ENCODE measurements at regions of chr6 and their contacts with region 1.

Region 1: DNA sequence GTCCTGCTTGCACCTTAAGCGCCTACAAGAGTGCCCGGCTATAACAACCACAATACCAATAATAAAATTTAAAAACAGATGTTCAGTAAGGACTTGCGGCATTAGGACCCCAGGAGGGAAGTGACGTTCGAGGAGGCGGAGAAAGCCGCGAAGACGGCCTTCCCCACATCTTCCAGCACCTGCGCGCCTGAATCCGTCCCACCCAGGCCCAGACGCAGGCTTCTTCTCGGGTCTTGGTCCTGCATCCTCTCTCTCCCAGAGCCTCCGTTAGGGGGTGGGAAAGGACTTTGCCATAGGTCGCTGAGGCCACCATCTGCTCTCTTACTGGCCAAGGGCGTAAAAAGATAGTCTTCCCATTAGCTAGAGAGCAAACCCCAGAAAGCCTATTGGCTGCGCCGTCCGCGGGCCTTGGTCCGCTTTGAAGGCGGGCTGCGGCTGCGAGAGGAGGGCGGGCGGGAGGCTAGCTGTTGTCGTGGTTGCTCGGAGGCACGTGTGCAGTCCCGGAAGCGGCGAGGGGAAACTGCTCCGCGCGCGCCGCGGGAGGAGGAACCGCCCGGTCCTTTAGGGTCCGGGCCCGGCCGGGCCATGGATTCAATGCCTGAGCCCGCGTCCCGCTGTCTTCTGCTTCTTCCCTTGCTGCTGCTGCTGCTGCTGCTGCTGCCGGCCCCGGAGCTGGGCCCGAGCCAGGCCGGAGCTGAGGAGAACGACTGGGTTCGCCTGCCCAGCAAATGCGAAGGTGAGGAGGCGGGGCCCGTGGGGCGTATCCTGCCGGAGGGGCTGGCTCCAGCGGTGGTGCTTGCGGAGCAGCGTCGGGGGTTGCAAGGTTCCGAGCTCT is at the start of gene CNPY3:
- DNase-seq: peak; percentile 98
- H3K4me3 Mint-ChIP-seq: peak within 1 kb of the TSS; percentile 91
- H3K27ac Mint-ChIP-seq: peak within 1 kb of the TSS; percentile 98
- H3K4me1 Mint-ChIP-seq: peaks cover 34% of the 10 kb centered on the region
- H3K27me3 Mint-ChIP-seq: no peaks in the 10 kb centered on the region
- total RNA-seq, gene CNPY3: 45.9 and 49.0 TPM in 2 replicates

Region 2: GRCh38 chr6:42771741-42772100 is 157.5 kb before region 1 on chr6:
- intact Hi-C with region 1: loop called (anchors 2 kb)
- DNase-seq: peak; percentile 77
- H3K4me3 Mint-ChIP-seq: peak overlapping the region; percentile 83
- H3K27ac Mint-ChIP-seq: peak overlapping the region; percentile 99
- H3K4me1 Mint-ChIP-seq: peaks cover 55% of the 10 kb centered on the region
- H3K27me3 Mint-ChIP-seq: no peaks in the 10 kb centered on the region

Region 3: GRCh38 chr6:42901536-42901957 is 27.7 kb before region 1 on chr6:
- intact Hi-C with region 1: loop called (anchors 2 kb)
- DNase-seq: peak; percentile 93
- H3K4me3 Mint-ChIP-seq: peak overlapping the region; percentile 4
- H3K27ac Mint-ChIP-seq: no peak overlapping the region
- H3K4me1 Mint-ChIP-seq: peaks cover 17% of the 10 kb centered on the region
- H3K27me3 Mint-ChIP-seq: peaks cover 2% of the 10 kb centered on the region

Region 4: DNA sequence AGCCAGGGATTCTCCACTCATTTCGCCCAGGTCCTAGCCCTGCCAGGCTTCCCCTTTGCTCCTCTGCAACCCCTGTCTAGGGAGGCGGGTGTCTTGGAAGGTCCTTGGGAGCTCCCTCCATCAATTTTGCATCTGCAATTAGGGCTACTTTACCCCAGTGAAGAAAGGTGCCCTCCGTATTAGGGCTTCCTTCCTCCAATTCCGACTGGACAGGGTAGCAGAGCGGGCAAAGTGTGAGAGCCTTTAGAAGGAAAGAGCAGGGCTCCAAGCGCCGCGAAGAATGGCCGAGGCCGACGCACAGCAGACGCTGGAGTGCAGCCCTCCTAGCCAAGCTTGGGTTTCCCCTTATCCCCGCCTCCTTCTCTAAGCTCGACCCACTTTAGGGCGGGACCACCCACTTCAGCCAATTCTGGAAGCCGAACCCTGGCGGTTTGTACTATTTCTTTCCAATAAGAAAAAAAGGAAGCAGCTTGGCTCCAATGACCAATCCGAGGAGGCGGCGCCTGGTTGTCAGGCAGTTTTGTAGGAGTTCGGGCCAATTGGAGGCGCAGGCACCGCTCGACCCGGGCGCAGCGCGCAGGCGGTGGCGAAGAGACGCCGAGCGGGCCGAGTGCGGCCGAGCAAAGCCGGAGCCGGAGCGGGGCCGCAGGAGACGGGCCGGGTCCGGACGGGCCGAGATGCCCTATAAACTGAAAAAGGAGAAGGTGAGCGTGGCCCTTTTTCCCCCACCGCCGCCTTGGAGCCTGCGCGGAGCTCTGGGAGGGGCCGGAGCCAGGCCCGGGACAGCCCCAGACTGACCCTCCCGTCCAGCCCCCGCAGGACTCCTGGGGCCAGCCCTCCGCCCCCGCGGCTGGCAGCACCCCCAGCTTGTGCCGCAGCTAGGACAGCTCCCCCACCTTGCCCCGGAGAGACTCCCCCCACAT is 55.1 kb after region 1 on chr6 and contains the start of gene PPP2R5D:
- intact Hi-C with region 1: loop called (anchors 1 kb)
- DNase-seq: peak; percentile 99
- H3K4me3 Mint-ChIP-seq: peak within 1 kb of the TSS; percentile 98
- H3K27ac Mint-ChIP-seq: peak within 1 kb of the TSS; percentile 91
- H3K4me1 Mint-ChIP-seq: peaks cover 54% of the 10 kb centered on the region
- H3K27me3 Mint-ChIP-seq: no peaks in the 10 kb centered on the region
- total RNA-seq, gene PPP2R5D: 54.2 and 54.6 TPM in 2 replicates

Region 5: GRCh38 chr6:43053545-43054205 is 124.5 kb after region 1 on chr6 and contains the start of gene CUL7:
- intact Hi-C with region 1: loop called (anchors 1 kb)
- DNase-seq: peak; percentile 98
- H3K4me3 Mint-ChIP-seq: peak within 1 kb of the TSS; percentile 96
- H3K27ac Mint-ChIP-seq: peak within 1 kb of the TSS; percentile 98
- H3K4me1 Mint-ChIP-seq: peaks cover 43% of the 10 kb centered on the region
- H3K27me3 Mint-ChIP-seq: no peaks in the 10 kb centered on the region
- total RNA-seq, gene CUL7: 22.6 and 24.7 TPM in 2 replicates

Measured in activated CD4-positive, alpha-beta T cell treated with anti-CD3 and anti-CD28 coated beads, Interleukin-2, amount 10 ng/mL, durations not matched to agents 24 days and 14 days (primary cell).